Tibial artery (tissue), 4 donors: ENCODE measurements at regions of chrX and their contacts with region 1.

Region 1: GRCh38 chrX:39820938-39821708 is 276.6 kb downstream of the BCOR start:
- DNase-seq: no peak
- H3K4me3 ChIP-seq: peak overlapping the region; percentile 49 to 54
- H3K27ac ChIP-seq: peak overlapping the region in 1 of 2 donors; percentile 49
- H3K4me1 ChIP-seq: peaks cover 0 to 44% (median 19%) of the 10 kb centered on the region in 4 donors
- H3K27me3 ChIP-seq: no peaks in the 10 kb centered on the region
- CTCF ChIP-seq: no peak

Region 2: GRCh38 chrX:40266490-40267333 is 445.6 kb after region 1 on chrX:
- intact Hi-C with region 1: loop called (anchors 10 kb)
- DNase-seq: peak; percentile 41 to 80
- H3K4me3 ChIP-seq: peak overlapping the region; percentile 55 to 60
- H3K27ac ChIP-seq: peak overlapping the region; percentile 84 to 89
- H3K4me1 ChIP-seq: peaks cover 0 to 32% (median 7%) of the 10 kb centered on the region in 4 donors
- H3K27me3 ChIP-seq: no peaks in the 10 kb centered on the region
- CTCF ChIP-seq: peak; percentile 54 to 63

Region 3: GRCh38 chrX:40358994-40359393 is 537.9 kb after region 1 on chrX:
- intact Hi-C with region 1: no loop called
- DNase-seq: no peak
- H3K4me3 ChIP-seq: no peak overlapping the region
- H3K27ac ChIP-seq: no peak overlapping the region
- H3K4me1 ChIP-seq: no peaks in the 10 kb centered on the region
- H3K27me3 ChIP-seq: no peaks in the 10 kb centered on the region
- CTCF ChIP-seq: no peak